ENCODE measurements at regions of chr5 and their contacts with region 1.

Region 1: DNA sequence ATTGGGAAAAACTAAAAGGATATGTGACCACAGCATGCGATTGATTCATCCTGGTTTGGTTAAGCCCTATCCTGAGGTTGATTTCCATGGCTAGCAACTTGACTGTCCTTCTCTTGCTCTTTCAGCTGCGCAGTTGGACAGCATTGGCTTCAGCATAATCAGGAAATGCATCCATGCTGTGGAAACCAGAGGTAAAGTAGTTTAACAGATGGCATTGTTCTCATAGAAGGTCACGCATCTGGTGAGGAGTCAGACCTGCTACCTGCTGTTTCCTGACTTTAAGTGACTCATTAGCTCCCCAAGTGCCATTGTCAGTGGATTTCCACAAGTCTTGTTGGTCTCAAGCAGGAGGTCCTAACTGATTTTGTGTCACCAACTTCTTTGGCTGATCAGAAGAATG is 266.9 kb downstream of the ARHGAP26 start:
- DNase-seq: no peak
- H3K4me3 Mint-ChIP-seq: no peak overlapping the region
- H3K27ac Mint-ChIP-seq: peak overlapping the region; percentile 83
- H3K4me1 Mint-ChIP-seq: peaks cover 65% of the 10 kb centered on the region
- H3K27me3 Mint-ChIP-seq: no peaks in the 10 kb centered on the region

Region 2: DNA sequence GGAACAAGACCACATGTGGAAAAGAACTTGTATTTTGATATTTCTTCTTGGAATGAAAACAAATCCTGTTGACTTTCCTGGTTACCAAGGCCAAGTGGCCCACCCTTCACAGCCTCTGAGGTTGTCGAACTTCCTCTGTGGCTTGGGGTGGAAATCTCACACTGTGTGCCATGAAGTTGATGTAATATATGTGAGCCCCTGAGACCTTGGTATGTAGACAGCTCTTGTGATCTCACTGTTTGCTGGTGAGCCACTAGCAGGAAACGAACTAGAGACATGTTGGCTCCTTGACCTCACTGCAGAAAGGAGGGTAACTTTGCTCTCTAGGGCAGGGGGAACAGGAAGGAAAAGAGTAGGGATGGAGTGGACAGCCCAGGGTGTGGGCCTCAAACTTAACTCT is 107.5 kb before region 1 on chr5:
- intact Hi-C with region 1: no loop called
- DNase-seq: no peak
- H3K4me3 Mint-ChIP-seq: no peak overlapping the region
- H3K27ac Mint-ChIP-seq: peak overlapping the region; percentile 62
- H3K4me1 Mint-ChIP-seq: peaks cover 54% of the 10 kb centered on the region
- H3K27me3 Mint-ChIP-seq: no peaks in the 10 kb centered on the region

Region 3: DNA sequence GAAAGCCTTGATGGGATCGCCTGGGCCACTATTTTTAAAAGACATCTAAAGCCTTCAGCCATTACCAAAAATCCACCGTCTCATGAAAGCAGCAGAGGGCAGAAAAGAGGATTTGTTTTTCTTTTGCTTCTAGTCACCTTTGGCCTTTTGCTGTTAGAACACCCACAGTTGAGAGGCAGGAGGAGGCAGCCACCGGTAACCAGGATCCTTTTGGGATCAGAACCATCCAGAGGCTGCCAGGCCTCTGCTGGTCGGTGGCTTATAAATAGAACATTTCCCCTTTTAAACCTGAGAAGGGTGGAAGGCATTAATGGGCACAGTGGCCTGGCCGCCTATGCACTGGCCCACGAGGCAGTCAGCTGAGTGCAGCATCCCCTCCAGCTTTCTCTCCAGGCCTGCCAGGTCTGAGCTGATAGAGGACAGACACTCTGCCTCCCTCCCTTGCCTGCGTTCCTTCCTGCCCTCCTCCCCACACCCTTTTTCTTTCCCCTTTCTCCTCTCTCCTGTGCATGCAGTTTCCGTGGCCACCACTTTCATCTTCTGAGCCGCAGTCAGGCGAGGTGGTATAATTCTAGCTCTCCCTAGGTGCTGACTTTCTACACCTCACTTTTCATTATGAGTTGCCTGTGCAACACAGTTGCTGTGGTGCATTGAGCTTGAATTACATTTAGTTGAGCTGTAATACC is 13.5 kb before region 1 on chr5:
- intact Hi-C with region 1: loop called (anchors 1 kb)
- DNase-seq: peak; percentile 50
- H3K4me3 Mint-ChIP-seq: peak overlapping the region; percentile 4
- H3K27ac Mint-ChIP-seq: peak overlapping the region; percentile 45
- H3K4me1 Mint-ChIP-seq: peaks cover 67% of the 10 kb centered on the region
- H3K27me3 Mint-ChIP-seq: peaks cover 4% of the 10 kb centered on the region

Region 4: GRCh38 chr5:143051244-143052058 is 14.4 kb after region 1 on chr5:
- intact Hi-C with region 1: loop called (anchors 1 kb)
- DNase-seq: no peak
- H3K4me3 Mint-ChIP-seq: no peak overlapping the region
- H3K27ac Mint-ChIP-seq: peak overlapping the region; percentile 68
- H3K4me1 Mint-ChIP-seq: peaks cover 81% of the 10 kb centered on the region
- H3K27me3 Mint-ChIP-seq: no peaks in the 10 kb centered on the region

Measured in activated T-helper 1 cell treated with anti-CD3 and anti-CD28 coated beads, Interleukin-12 subunit alpha, Interleukin-12 subunit beta, Interleukin-2, Interleukin-4 antibody, amounts not matched to agents 30 ng/mL and 10 ng/mL and 1 ng/mL, durations not matched to agents 14 hours and 24 hours and 36 hours (primary cell).